A549 (cell line): ENCODE measurements at regions of chr5 and their contacts with region 1.

Region 1: DNA sequence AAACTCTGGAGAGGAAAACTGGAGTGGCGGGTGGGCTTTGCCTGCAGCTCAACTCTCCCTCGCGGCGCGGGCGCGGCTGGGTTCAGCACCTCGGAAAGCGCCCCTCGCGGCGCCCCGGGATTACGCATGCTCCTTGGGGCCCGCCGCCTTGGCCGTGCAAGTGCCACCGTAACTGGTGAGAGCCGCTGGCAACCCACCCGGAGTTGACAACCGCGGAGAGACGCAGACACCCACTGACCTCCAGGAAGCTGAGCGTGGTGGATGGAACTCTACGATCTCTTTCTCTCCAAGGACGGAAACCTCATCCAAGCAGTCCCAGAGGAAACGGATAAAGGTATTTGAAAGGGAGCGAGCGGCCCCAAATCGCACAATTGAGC is 194 bp upstream of the RXFP3 start:
- DNase-seq: peak; percentile 12 to 20
- ATAC-seq: peak; percentile 53 to 79; a peak in 3 of 6 replicates
- H3K4me3 ChIP-seq: no peak overlapping the region
- H3K27ac ChIP-seq: no peak overlapping the region
- H3K4me1 ChIP-seq: peaks cover 9% of the 10 kb centered on the region; the same call in 2 of the 3 replicates
- CTCF ChIP-seq: no peak
- EP300 ChIP-seq: no peak
- POLR2A ChIP-seq: no peak
- RAD21 ChIP-seq: no peak

Region 2: GRCh38 chr5:33470544-33470943 is 465.4 kb before region 1 on chr5:
- CTCF ChIA-PET with region 1: interaction called, 20 read pairs
- POLR2A ChIA-PET with region 1: interaction called, 10 read pairs
- DNase-seq: peak; percentile 18 to 45
- ATAC-seq: peak; percentile 90 to 91
- H3K4me3 ChIP-seq: no peak overlapping the region
- H3K27ac ChIP-seq: no peak overlapping the region
- H3K4me1 ChIP-seq: peaks cover 6% of the 10 kb centered on the region; the same call in 1 of the 3 replicates
- CTCF ChIP-seq: peak; percentile 46
- EP300 ChIP-seq: no peak
- POLR2A ChIP-seq: no peak
- RAD21 ChIP-seq: peak; percentile 42 to 54

Region 3: GRCh38 chr5:33588654-33589372 is 347.2 kb before region 1 on chr5:
- CTCF ChIA-PET with region 1: interaction called, 11 read pairs
- POLR2A ChIA-PET with region 1: no interaction called
- DNase-seq: peak; percentile 21 to 56
- ATAC-seq: peak; percentile 71 to 93; a peak in 4 of 6 replicates
- H3K4me3 ChIP-seq: no peak overlapping the region
- H3K27ac ChIP-seq: no peak overlapping the region
- H3K4me1 ChIP-seq: no peaks in the 10 kb centered on the region
- CTCF ChIP-seq: peak; percentile 40; the same call in 2 of the 3 replicates
- EP300 ChIP-seq: no peak
- POLR2A ChIP-seq: no peak
- RAD21 ChIP-seq: peak; percentile 40 to 64; a peak in 4 of 5 replicates

Region 4: DNA sequence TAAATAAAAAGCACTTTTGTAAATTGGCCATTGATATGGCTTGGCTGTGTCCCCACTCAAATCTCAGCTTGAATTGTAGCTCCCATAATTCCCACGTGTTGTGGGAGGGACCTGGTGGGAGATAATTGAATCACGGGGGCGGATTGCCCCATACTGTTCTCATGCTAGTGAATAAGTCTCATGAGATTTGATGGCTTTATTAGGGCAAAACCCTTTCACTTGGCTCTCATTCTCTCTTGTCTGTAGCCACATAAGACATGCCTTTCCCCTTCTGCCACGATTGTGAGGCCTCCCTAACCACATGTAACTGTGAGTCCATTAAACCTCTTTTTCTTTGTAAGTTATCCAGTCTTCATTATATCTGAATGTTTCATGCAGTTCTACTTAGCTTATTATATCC is 342.0 kb before region 1 on chr5:
- CTCF ChIA-PET with region 1: interaction called, 11 read pairs
- POLR2A ChIA-PET with region 1: no interaction called
- DNase-seq: no peak
- ATAC-seq: no peak
- H3K4me3 ChIP-seq: no peak overlapping the region
- H3K27ac ChIP-seq: no peak overlapping the region
- H3K4me1 ChIP-seq: no peaks in the 10 kb centered on the region
- CTCF ChIP-seq: no peak
- EP300 ChIP-seq: no peak
- POLR2A ChIP-seq: no peak
- RAD21 ChIP-seq: no peak

Region 5: DNA sequence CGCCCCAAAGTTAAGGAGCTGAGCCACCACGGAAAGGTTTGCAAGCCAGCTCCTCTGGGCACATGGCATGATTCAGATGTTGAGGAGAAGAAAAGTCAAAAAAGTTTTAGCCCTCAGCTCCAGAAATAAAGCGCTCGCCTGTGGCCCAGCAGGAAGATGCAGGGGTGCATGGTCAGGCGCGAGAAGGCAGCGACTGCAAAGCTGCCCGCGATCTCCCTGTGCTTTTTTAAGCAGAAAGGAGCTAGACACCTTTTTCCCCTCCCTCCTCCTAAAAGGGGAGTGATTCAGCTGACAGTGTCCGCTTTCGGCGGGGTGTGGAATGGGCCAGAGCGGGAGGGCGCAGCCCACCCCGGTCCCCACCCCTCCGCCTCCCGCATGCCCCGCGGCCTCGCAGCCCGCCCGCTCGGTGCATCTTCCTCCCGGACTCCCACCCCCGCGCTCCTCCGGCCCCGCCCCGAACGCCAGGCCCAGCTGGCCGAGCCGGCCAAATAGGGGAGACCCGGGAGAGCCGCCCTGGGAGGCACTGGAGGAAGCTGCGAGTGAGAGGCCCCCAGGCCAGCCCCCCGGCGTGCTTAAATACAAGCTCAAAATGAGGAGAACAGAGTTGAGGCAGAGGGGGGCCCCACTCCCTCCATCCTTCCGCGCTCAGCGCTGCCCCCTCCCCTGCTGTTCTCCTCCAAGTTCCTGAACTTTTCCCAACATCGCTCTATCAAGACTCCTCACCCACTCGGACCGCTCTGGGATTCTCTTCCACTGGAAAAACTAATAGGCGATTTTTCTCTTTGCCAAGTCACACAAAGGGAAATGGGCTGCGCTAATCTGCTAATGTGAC is 44.0 kb before region 1 on chr5 and contains the start of gene ADAMTS12:
- CTCF ChIA-PET with region 1: interaction called, 21 read pairs
- POLR2A ChIA-PET with region 1: no interaction called
- DNase-seq: peak in 1 of 2 experiments; percentile 21
- ATAC-seq: peak; percentile 64 to 73
- H3K4me3 ChIP-seq: peak within 1 kb of the TSS; percentile 50
- H3K27ac ChIP-seq: peak within 1 kb of the TSS; percentile 50 to 78
- H3K4me1 ChIP-seq: peaks cover 41% of the 10 kb centered on the region
- CTCF ChIP-seq: no peak
- EP300 ChIP-seq: no peak
- POLR2A ChIP-seq: no peak
- RAD21 ChIP-seq: no peak
- polyA plus RNA-seq, gene ADAMTS12: 5.9 and 6.8 TPM in 2 replicates

Region 6: GRCh38 chr5:33921002-33921401 is 15.0 kb before region 1 on chr5:
- CTCF ChIA-PET with region 1: interaction called, 14 read pairs
- POLR2A ChIA-PET with region 1: no interaction called
- DNase-seq: no peak
- ATAC-seq: no peak
- H3K4me3 ChIP-seq: no peak overlapping the region
- H3K27ac ChIP-seq: no peak overlapping the region
- H3K4me1 ChIP-seq: no peaks in the 10 kb centered on the region
- CTCF ChIP-seq: no peak
- EP300 ChIP-seq: no peak
- POLR2A ChIP-seq: no peak
- RAD21 ChIP-seq: no peak

Region 7: DNA sequence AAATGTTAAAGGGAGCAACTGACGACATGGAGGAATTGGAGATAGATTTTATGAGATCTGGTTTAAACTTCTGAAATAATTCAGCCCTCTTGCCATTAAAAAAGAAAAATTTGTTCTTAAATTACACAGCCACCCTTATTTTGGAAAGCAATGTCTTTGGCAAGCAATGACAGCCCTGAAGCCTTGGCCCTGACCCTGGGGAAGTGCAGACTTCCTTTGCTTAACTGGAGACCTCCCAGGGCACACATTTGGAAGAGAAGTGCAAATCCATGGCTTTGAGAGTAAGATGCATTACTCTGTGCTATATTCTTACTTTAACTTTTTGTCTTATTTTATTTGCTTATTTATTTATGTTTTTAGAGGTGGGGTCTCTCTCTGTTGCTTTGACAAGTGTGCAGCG is 22.2 kb after region 1 on chr5:
- CTCF ChIA-PET with region 1: interaction called, 11 read pairs
- POLR2A ChIA-PET with region 1: no interaction called
- DNase-seq: no peak
- ATAC-seq: no peak
- H3K4me3 ChIP-seq: no peak overlapping the region
- H3K27ac ChIP-seq: no peak overlapping the region
- H3K4me1 ChIP-seq: no peaks in the 10 kb centered on the region
- CTCF ChIP-seq: no peak
- EP300 ChIP-seq: no peak
- POLR2A ChIP-seq: no peak
- RAD21 ChIP-seq: no peak